T-cell (primary cell): ENCODE measurements at regions of chr3 and their contacts with region 1.

Region 1: DNA sequence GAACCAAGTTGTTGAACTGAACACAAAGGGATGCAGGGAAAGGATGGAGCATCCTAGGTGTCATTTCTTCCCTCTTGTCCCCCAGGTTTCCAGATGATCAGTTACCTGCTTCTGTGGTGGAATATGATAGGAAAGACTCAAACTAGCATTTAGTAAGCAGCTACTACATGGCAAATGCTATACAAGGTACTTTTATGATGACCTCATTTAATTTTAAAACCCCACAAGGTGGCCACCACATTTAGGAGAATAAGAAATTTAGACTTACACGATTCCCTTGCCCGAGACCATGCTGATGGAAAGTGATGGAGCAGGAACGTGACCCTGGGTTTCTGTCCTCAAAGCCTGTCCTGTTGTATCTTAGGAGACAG is 40.9 kb downstream of the CCR4 start:
- DNase-seq: no peak
- ATAC-seq: no peak
- H3K4me3 ChIP-seq: no peak overlapping the region
- H3K4me3 Mint-ChIP-seq: no peak overlapping the region
- H3K27ac ChIP-seq: peak overlapping the region; percentile 12
- H3K27ac Mint-ChIP-seq: no peak overlapping the region
- H3K4me1 ChIP-seq: peaks cover 2 to 17% of the 10 kb centered on the region in 2 experiments
- H3K4me1 Mint-ChIP-seq: peaks cover 36 to 65% (median 49%) of the 10 kb centered on the region in 3 donors
- H3K27me3 ChIP-seq: no peaks in the 10 kb centered on the region
- H3K27me3 Mint-ChIP-seq: no peaks in the 10 kb centered on the region

Region 2: GRCh38 chr3:32340039-32340438 is 652.3 kb before region 1 on chr3:
- CTCF ChIA-PET with region 1: interaction called in 1 of 2 experiments, 10 read pairs
- POLR2A ChIA-PET with region 1: no interaction called
- DNase-seq: peak in 19 of 35 experiments; percentile 2 to 70 (median 11)
- ATAC-seq: peak; percentile 61 to 85 (median 73)
- H3K4me3 ChIP-seq: no peak overlapping the region
- H3K4me3 Mint-ChIP-seq: no peak overlapping the region
- H3K27ac ChIP-seq: no peak overlapping the region
- H3K27ac Mint-ChIP-seq: no peak overlapping the region
- H3K4me1 ChIP-seq: peaks cover 11 to 18% of the 10 kb centered on the region in 2 experiments
- H3K4me1 Mint-ChIP-seq: peaks cover 27 to 34% (median 31%) of the 10 kb centered on the region in 3 donors
- H3K27me3 ChIP-seq: no peaks in the 10 kb centered on the region
- H3K27me3 Mint-ChIP-seq: no peaks in the 10 kb centered on the region

Region 3: GRCh38 chr3:32434206-32434605 is 558.1 kb before region 1 on chr3:
- CTCF ChIA-PET with region 1: no interaction called
- POLR2A ChIA-PET with region 1: interaction called in 1 of 2 experiments, 14 read pairs
- DNase-seq: no peak
- ATAC-seq: no peak
- H3K4me3 ChIP-seq: no peak overlapping the region
- H3K4me3 Mint-ChIP-seq: no peak overlapping the region
- H3K27ac ChIP-seq: peak overlapping the region; percentile 96
- H3K27ac Mint-ChIP-seq: peak overlapping the region in 1 of 2 donors; percentile 100
- H3K4me1 ChIP-seq: peaks cover 47 to 84% of the 10 kb centered on the region in 2 experiments
- H3K4me1 Mint-ChIP-seq: peaks cover 82 to 91% (median 84%) of the 10 kb centered on the region in 3 donors
- H3K27me3 ChIP-seq: no peaks in the 10 kb centered on the region
- H3K27me3 Mint-ChIP-seq: no peaks in the 10 kb centered on the region

Region 4: GRCh38 chr3:32922078-32922477 is 70.2 kb before region 1 on chr3:
- CTCF ChIA-PET with region 1: no interaction called
- POLR2A ChIA-PET with region 1: no interaction called
- DNase-seq: no peak
- ATAC-seq: no peak
- H3K4me3 ChIP-seq: no peak overlapping the region
- H3K4me3 Mint-ChIP-seq: no peak overlapping the region
- H3K27ac ChIP-seq: no peak overlapping the region
- H3K27ac Mint-ChIP-seq: no peak overlapping the region
- H3K4me1 ChIP-seq: no peaks in the 10 kb centered on the region
- H3K4me1 Mint-ChIP-seq: no peaks in the 10 kb centered on the region
- H3K27me3 ChIP-seq: peaks cover 0 to 3% of the 10 kb centered on the region in 2 experiments
- H3K27me3 Mint-ChIP-seq: peaks cover 1 to 4% of the 10 kb centered on the region in 2 donors

Region 5: GRCh38 chr3:32973982-32974381 is 18.3 kb before region 1 on chr3:
- CTCF ChIA-PET with region 1: interaction called in 1 of 2 experiments, 3 read pairs
- POLR2A ChIA-PET with region 1: interaction called in 1 of 2 experiments, 11 read pairs
- DNase-seq: peak in 3 of 35 experiments; percentile 10 to 58 (median 16)
- ATAC-seq: peak; percentile 90 to 99 (median 94)
- H3K4me3 ChIP-seq: no peak overlapping the region
- H3K4me3 Mint-ChIP-seq: no peak overlapping the region
- H3K27ac ChIP-seq: peak overlapping the region; percentile 22
- H3K27ac Mint-ChIP-seq: peak overlapping the region; percentile 84 to 86
- H3K4me1 ChIP-seq: peaks cover 2 to 29% of the 10 kb centered on the region in 2 experiments
- H3K4me1 Mint-ChIP-seq: peaks cover 28 to 45% (median 36%) of the 10 kb centered on the region in 3 donors
- H3K27me3 ChIP-seq: no peaks in the 10 kb centered on the region
- H3K27me3 Mint-ChIP-seq: no peaks in the 10 kb centered on the region

Region 6: DNA sequence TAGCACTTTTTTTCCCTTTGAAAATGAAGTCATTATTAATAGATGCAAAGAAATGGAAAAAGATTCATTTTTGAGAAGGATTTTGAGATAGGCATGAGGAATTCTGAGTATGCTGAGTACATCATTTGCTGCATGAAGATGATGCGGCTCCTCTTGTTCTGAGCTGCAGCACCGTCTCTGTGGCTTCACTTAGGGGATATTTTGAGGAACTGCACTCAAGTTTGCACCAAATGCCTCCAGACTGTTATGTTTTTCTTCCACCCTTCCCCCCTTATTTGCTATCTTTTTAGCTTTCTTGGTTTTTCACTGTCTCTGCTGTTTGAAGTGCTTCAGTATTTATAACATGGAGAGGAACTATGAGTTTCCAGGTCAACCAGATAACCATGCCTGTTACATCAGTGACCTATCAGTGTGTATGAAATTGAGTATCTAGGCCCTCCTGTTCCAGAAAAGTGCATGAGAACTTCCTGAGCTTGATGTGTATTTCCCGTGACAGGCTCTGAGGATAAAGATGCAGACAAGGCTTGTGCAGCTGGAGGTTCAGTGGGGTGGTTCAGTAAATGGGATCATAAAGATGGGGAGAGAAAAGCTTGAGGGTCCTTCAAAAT is 934.8 kb after region 1 on chr3:
- CTCF ChIA-PET with region 1: no interaction called
- POLR2A ChIA-PET with region 1: no interaction called
- DNase-seq: no peak
- ATAC-seq: no peak
- H3K4me3 ChIP-seq: no peak overlapping the region
- H3K4me3 Mint-ChIP-seq: no peak overlapping the region
- H3K27ac ChIP-seq: no peak overlapping the region
- H3K27ac Mint-ChIP-seq: no peak overlapping the region
- H3K4me1 ChIP-seq: no peaks in the 10 kb centered on the region
- H3K4me1 Mint-ChIP-seq: no peaks in the 10 kb centered on the region
- H3K27me3 ChIP-seq: peaks cover 0 to 2% of the 10 kb centered on the region in 2 experiments
- H3K27me3 Mint-ChIP-seq: no peaks in the 10 kb centered on the region